ENCODE measurements at regions of chr3 and their contacts with region 1.

Region 1: GRCh38 chr3:47324278-47324865 is 41.6 kb downstream of the KLHL18 start:
- DNase-seq: peak; percentile 24
- ATAC-seq: peak; percentile 89
- H3K4me3 ChIP-seq: no peak overlapping the region
- H3K27ac ChIP-seq: no peak overlapping the region
- H3K4me1 ChIP-seq: no peaks in the 10 kb centered on the region
- H3K27me3 ChIP-seq: no peaks in the 10 kb centered on the region
- CTCF ChIP-seq: peak; percentile 70 to 84 (median 73)
- EP300 ChIP-seq: no peak
- POLR2A ChIP-seq: no peak
- RAD21 ChIP-seq: peak; percentile 93

Region 2: DNA sequence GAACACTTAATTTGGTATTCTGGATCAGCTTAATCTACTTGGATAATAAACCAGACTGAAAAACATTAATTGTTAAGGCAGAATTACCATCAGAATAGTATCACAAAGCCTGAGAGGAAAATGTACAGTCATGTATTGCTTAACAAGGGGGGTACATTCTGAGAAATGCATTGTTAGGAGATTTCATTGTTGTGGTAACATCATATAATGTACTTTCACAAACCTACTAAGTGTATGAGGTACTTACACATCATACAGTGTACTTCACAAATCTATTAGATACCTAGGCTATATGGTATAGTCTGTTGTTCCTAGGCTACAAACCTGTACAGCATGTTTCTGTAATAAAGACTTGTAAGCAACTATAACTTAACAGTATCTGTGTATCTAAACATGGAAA is 276.7 kb before region 1 on chr3:
- CTCF ChIA-PET with region 1: interaction called, 3 read pairs
- POLR2A ChIA-PET with region 1: no interaction called
- RAD21 ChIA-PET with region 1: no interaction called
- SMC1A ChIA-PET with region 1: no interaction called
- in situ Hi-C with region 1: no loop called
- intact Hi-C with region 1: loop called (anchors 10 kb)
- DNase-seq: no peak
- ATAC-seq: peak; percentile 54
- H3K4me3 ChIP-seq: no peak overlapping the region
- H3K27ac ChIP-seq: no peak overlapping the region
- H3K4me1 ChIP-seq: no peaks in the 10 kb centered on the region
- H3K27me3 ChIP-seq: no peaks in the 10 kb centered on the region
- CTCF ChIP-seq: no peak
- EP300 ChIP-seq: no peak
- POLR2A ChIP-seq: no peak
- RAD21 ChIP-seq: no peak

Region 3: DNA sequence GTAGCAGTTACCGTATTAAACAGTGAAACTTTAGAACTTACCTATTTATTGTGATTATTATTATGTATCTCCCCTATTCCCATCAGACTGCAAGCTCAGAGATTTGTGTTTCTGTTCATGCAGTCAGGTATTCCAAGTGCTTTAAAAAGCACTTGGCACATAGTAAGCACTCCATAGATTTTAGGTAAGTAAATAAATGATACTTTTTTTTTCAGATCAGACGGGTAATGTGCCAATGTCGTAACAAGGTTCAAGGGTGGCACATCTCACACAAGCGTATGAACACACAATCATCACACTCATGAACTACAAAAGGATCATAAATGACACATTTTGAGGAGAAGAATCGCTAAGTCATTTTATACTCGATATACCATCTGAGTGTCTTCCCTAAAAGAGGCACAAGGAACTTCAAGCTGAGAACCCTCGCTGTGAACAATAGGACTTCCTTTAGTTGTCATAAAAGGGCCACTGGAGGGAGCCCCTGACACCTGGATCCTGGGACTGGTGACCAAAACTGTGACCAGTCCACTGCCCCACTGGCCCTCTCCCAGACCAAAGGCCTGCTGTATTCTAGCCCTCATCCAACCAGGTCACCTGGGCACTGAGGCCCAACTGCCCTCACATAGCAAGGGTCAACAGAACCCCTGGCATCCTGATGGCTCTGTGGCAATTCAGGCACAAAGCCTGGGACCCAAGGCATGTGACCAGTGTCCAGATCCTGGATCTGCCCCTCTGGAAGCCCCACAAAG is 73.9 kb before region 1 on chr3:
- CTCF ChIA-PET with region 1: interaction called, 43 read pairs
- POLR2A ChIA-PET with region 1: no interaction called
- RAD21 ChIA-PET with region 1: interaction called, 28 read pairs
- SMC1A ChIA-PET with region 1: interaction called, 35 read pairs
- in situ Hi-C with region 1: no loop called
- intact Hi-C with region 1: loop called (anchors 1 kb)
- DNase-seq: no peak
- ATAC-seq: peak; percentile 77
- H3K4me3 ChIP-seq: no peak overlapping the region
- H3K27ac ChIP-seq: no peak overlapping the region
- H3K4me1 ChIP-seq: no peaks in the 10 kb centered on the region
- H3K27me3 ChIP-seq: no peaks in the 10 kb centered on the region
- CTCF ChIP-seq: peak; percentile 43 to 59 (median 45); a peak in 5 of 6 replicates
- EP300 ChIP-seq: no peak
- POLR2A ChIP-seq: no peak
- RAD21 ChIP-seq: peak; percentile 51; the same call in 1 of the 2 replicates

Region 4: GRCh38 chr3:47282424-47283192 is 41.8 kb before region 1 on chr3 and contains the starts of genes KIF9 and KLHL18:
- CTCF ChIA-PET with region 1: interaction called, 8 read pairs
- POLR2A ChIA-PET with region 1: interaction called, 3 read pairs
- RAD21 ChIA-PET with region 1: interaction called, 12 read pairs
- SMC1A ChIA-PET with region 1: interaction called, 7 read pairs
- in situ Hi-C with region 1: no loop called
- intact Hi-C with region 1: loop called (anchors 1 kb)
- DNase-seq: peak; percentile 89
- ATAC-seq: peak; percentile 90
- H3K4me3 ChIP-seq: peak within 1 kb of the TSS; percentile 95
- H3K27ac ChIP-seq: peak within 1 kb of the TSS; percentile 92
- H3K4me1 ChIP-seq: peaks cover 12% of the 10 kb centered on the region
- H3K27me3 ChIP-seq: no peaks in the 10 kb centered on the region
- CTCF ChIP-seq: peak in 1 of 3 experiments; percentile 9; a peak in 1 of 6 replicates
- EP300 ChIP-seq: no peak; a peak in 1 of 4 replicates
- POLR2A ChIP-seq: peak; percentile 96
- RAD21 ChIP-seq: no peak
- polyA plus RNA-seq, gene KIF9: 7.6 to 8.0 TPM
- polyA plus RNA-seq, gene KLHL18: 65.6 to 69.8 TPM

Region 5: DNA sequence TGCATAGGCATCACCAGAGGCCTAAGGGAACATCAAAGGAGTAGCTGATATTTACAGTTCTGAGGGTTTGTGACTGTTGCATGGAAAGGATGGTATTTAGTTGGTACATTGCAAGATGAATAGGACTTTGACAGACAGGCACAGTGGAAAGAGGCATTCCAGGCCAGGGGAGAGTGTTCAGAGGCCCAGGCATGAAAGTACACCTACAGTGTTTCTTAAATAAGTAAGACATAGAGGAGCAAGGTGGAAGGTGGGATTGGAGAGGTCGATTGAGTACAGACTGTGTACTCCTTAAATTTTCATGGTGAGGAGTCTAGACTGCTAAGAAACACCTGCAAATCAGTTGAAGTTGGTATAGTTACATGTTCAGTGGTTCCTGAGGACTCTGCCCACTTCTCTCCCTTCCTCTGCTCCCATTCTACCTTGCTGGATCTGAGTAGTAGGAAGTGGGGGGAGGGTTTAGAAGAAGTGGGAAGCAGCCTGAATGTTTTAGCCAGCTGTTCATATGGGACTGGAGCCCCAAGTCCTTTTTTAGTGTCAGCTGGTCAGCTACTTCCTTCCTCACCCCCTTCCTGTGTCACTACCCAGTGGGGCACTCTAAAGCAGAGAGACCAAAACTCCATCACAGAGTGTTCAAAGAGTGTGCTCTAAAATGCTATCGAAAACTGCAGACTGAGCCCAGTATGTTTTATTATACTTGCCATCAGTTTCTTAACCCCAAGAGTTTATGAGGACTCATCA is 27.6 kb before region 1 on chr3:
- CTCF ChIA-PET with region 1: interaction called, 13 read pairs
- POLR2A ChIA-PET with region 1: interaction called, 4 read pairs
- RAD21 ChIA-PET with region 1: interaction called, 5 read pairs
- SMC1A ChIA-PET with region 1: interaction called, 15 read pairs
- in situ Hi-C with region 1: no loop called
- intact Hi-C with region 1: no loop called
- DNase-seq: no peak
- ATAC-seq: peak; percentile 61
- H3K4me3 ChIP-seq: no peak overlapping the region
- H3K27ac ChIP-seq: peak overlapping the region; percentile 17; the same call in 1 of the 2 replicates
- H3K4me1 ChIP-seq: peaks cover 34% of the 10 kb centered on the region
- H3K27me3 ChIP-seq: no peaks in the 10 kb centered on the region
- CTCF ChIP-seq: no peak
- EP300 ChIP-seq: no peak
- POLR2A ChIP-seq: no peak
- RAD21 ChIP-seq: no peak

Measured in GM12878 (cell line).